ENCODE measurements at regions of chr1 and their contacts with region 1.

Region 1: GRCh38 chr1:178542560-178543356 is 29.8 kb downstream of the TEX35 start:
- DNase-seq: peak; percentile 88
- H3K4me3 ChIP-seq: peak overlapping the region; percentile 75
- H3K27ac ChIP-seq: peak overlapping the region; percentile 84
- H3K4me1 ChIP-seq: peaks cover 31% of the 10 kb centered on the region
- CTCF ChIP-seq: peak; percentile 94

Region 2: GRCh38 chr1:178451529-178451928 is 91.2 kb before region 1 on chr1:
- CTCF ChIA-PET with region 1: no interaction called
- POLR2A ChIA-PET with region 1: no interaction called
- intact Hi-C with region 1: no loop called
- DNase-seq: no peak
- H3K4me3 ChIP-seq: no peak overlapping the region
- H3K27ac ChIP-seq: no peak overlapping the region
- H3K4me1 ChIP-seq: no peaks in the 10 kb centered on the region
- CTCF ChIP-seq: no peak

Region 3: GRCh38 chr1:178513278-178514022 is 29.3 kb before region 1 on chr1:
- CTCF ChIA-PET with region 1: no interaction called
- POLR2A ChIA-PET with region 1: no interaction called
- intact Hi-C with region 1: no loop called
- DNase-seq: no peak
- H3K4me3 ChIP-seq: no peak overlapping the region
- H3K27ac ChIP-seq: no peak overlapping the region
- H3K4me1 ChIP-seq: no peaks in the 10 kb centered on the region
- CTCF ChIP-seq: no peak

Region 4: GRCh38 chr1:178575611-178576331 is 33.0 kb after region 1 on chr1:
- CTCF ChIA-PET with region 1: interaction called, 9 read pairs
- POLR2A ChIA-PET with region 1: interaction called, 127 read pairs
- intact Hi-C with region 1: no loop called
- DNase-seq: peak; percentile 83
- H3K4me3 ChIP-seq: peak overlapping the region; percentile 67
- H3K27ac ChIP-seq: peak overlapping the region; percentile 99
- H3K4me1 ChIP-seq: peaks cover 91% of the 10 kb centered on the region
- CTCF ChIP-seq: no peak

Region 5: GRCh38 chr1:178607718-178608408 is 65.1 kb after region 1 on chr1:
- CTCF ChIA-PET with region 1: no interaction called
- POLR2A ChIA-PET with region 1: interaction called, 60 read pairs
- intact Hi-C with region 1: loop called (anchors 1 kb)
- DNase-seq: peak; percentile 45
- H3K4me3 ChIP-seq: no peak overlapping the region
- H3K27ac ChIP-seq: peak overlapping the region; percentile 98
- H3K4me1 ChIP-seq: peaks cover 74% of the 10 kb centered on the region
- CTCF ChIP-seq: no peak

Region 6: GRCh38 chr1:178725603-178726517 is 183.1 kb after region 1 on chr1:
- CTCF ChIA-PET with region 1: no interaction called
- POLR2A ChIA-PET with region 1: interaction called, 8 read pairs
- intact Hi-C with region 1: loop called (anchors 1 kb)
- DNase-seq: peak; percentile 95
- H3K4me3 ChIP-seq: peak overlapping the region; percentile 92
- H3K27ac ChIP-seq: peak overlapping the region; percentile 84
- H3K4me1 ChIP-seq: peaks cover 32% of the 10 kb centered on the region
- CTCF ChIP-seq: peak; percentile 58

Region 7: DNA sequence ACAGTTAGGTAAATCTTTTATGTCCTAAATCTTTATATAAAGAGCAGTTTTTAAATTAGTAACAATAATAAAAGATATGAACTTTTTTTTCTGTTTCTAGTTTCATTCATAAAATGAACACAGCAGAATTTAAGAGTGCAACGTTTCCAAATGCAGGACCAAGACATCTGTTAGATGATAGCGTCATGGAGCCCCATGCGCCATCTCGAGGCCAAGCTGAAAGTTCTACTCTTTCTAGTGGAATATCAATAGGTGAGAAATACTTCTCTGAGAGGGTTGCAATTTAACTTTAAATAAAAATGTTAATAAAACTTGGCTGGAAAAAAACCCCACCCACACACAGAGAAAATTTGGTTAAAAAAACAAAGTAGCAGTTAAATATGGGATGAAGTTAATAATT is 343.1 kb after region 1 on chr1:
- CTCF ChIA-PET with region 1: no interaction called
- POLR2A ChIA-PET with region 1: no interaction called
- intact Hi-C with region 1: loop called (anchors 5 kb)
- DNase-seq: no peak
- H3K4me3 ChIP-seq: no peak overlapping the region
- H3K27ac ChIP-seq: no peak overlapping the region
- H3K4me1 ChIP-seq: no peaks in the 10 kb centered on the region
- CTCF ChIP-seq: no peak

Region 8: DNA sequence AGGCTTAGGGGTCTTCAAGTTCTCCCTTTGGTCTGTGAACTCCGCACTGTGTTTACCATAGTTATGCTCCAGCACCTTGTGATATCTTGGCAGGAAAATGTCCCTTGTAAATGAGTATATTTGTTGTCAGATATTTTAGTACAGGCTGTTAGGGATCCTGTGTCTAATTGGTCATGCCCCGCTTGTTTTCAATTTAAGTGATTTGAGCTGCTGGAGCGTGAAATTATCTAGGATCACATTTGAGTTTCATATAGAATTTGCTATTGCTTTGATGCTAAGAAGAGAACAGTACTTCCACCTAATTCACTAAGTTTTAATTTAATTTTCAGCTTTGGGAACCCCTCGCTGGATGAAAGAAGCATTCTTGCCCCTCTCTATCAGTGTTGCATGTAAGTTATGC is 523.7 kb after region 1 on chr1:
- CTCF ChIA-PET with region 1: no interaction called
- POLR2A ChIA-PET with region 1: no interaction called
- intact Hi-C with region 1: loop called (anchors 1 kb)
- DNase-seq: no peak
- H3K4me3 ChIP-seq: no peak overlapping the region
- H3K27ac ChIP-seq: no peak overlapping the region
- H3K4me1 ChIP-seq: peaks cover 18% of the 10 kb centered on the region
- CTCF ChIP-seq: no peak

Region 9: GRCh38 chr1:179365320-179366092 is 822.7 kb after region 1 on chr1 and contains the start of gene AXDND1:
- CTCF ChIA-PET with region 1: no interaction called
- POLR2A ChIA-PET with region 1: no interaction called
- intact Hi-C with region 1: loop called (anchors 5 kb)
- DNase-seq: peak; percentile 91
- H3K4me3 ChIP-seq: peak within 1 kb of the TSS; percentile 92
- H3K27ac ChIP-seq: peak within 1 kb of the TSS; percentile 91
- H3K4me1 ChIP-seq: peaks cover 11% of the 10 kb centered on the region
- CTCF ChIP-seq: peak; percentile 25; the same call in 1 of the 2 replicates
- total RNA-seq, gene AXDND1: 0.16 and 0.23 TPM in 2 replicates